Activated B cell treated with CpG ODN at 0.5 μM for 24 hours (primary cell): ENCODE measurements at regions of chr19 and their contacts with region 1.

Region 1: DNA sequence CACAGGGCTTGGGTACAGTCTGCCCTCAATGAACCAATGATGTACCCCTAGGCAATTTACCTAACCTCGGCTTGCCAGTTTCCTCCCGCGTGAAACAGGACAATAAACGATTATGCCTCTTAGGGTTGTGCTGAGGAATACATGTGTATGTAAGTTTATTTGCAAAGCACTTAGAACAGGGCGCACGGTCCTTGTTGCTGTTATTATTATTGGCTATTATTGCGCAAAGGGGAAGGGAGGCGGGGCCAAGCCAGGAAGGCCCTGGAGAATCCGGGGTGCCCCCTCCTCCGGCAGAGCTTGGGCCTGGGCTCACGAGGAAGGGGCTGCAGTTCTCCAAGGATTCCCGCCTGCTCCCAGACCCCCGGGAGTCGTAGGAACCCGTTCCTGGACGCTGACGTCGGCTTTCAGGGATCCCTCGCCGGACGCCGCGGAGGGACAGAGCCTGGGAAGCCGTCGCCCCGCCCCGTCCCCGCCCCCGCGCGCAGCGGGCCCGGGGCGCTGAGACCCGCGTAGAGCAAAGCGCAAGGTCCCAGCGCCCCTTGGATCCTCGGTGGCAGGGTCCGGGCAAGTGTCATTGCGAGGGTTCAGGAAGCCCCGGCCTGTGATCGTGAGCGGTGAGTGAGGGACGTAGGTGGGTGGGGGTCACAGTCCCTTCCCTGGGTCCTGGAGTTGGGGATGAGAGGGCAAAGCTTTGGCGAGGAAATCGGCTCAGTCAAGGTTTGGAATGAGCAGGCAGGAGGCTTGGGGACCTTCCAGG is at the start of gene TMEM91:
- DNase-seq: no peak
- ATAC-seq: no peak
- H3K4me3 Mint-ChIP-seq: peak within 1 kb of the TSS; percentile 52
- H3K27ac Mint-ChIP-seq: no peak within 1 kb of the TSS
- H3K4me1 Mint-ChIP-seq: peaks cover 23% of the 10 kb centered on the region
- H3K27me3 Mint-ChIP-seq: no peaks in the 10 kb centered on the region
- CTCF ChIP-seq: no peak
- total RNA-seq, gene TMEM91: 3.7 and 4.6 TPM in 2 replicates

Region 2: DNA sequence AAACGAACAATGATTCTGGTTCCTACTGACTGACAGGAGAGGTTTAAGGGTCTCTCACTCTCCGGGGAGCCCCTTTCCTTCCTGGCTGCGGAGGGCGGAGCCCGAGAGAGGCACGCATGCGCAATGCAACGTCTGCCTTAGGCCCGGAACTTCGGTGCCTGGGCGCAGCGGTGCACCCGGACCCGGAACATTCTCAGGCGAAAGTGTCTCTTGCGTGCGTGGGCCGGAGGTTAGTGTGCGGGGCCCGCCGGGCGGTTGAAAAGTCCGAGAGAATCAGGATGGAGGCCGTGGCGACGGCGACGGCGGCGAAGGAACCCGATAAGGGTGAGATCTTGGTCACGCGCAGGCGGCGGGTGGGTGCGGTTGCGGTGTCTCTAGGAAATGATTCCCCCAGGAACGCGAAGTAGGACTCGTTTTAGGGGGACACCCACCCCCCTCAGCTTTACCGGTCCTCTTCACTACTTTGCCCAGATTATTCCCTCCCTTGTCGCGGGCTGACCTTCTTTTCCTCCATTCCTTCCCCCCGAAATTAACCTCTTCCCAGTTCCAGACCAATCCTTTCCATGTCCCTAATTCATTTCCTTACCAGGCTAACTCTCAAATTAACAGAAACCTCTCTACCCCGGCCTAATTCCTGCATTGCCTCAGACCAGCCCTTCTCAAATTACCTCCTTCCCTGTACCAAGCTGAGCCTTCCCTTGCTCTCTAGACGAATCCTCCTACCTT is 66.2 kb before region 1 on chr19 and contains the start of gene CCDC97:
- CTCF ChIA-PET with region 1: no interaction called
- POLR2A ChIA-PET with region 1: no interaction called
- intact Hi-C with region 1: no loop called
- DNase-seq: peak; percentile 92
- ATAC-seq: peak; percentile 76
- H3K4me3 Mint-ChIP-seq: peak within 1 kb of the TSS; percentile 99
- H3K27ac Mint-ChIP-seq: peak within 1 kb of the TSS; percentile 100
- H3K4me1 Mint-ChIP-seq: peaks cover 65% of the 10 kb centered on the region
- H3K27me3 Mint-ChIP-seq: no peaks in the 10 kb centered on the region
- CTCF ChIP-seq: no peak
- total RNA-seq, gene CCDC97: 61.7 and 65.3 TPM in 2 replicates

Region 3: DNA sequence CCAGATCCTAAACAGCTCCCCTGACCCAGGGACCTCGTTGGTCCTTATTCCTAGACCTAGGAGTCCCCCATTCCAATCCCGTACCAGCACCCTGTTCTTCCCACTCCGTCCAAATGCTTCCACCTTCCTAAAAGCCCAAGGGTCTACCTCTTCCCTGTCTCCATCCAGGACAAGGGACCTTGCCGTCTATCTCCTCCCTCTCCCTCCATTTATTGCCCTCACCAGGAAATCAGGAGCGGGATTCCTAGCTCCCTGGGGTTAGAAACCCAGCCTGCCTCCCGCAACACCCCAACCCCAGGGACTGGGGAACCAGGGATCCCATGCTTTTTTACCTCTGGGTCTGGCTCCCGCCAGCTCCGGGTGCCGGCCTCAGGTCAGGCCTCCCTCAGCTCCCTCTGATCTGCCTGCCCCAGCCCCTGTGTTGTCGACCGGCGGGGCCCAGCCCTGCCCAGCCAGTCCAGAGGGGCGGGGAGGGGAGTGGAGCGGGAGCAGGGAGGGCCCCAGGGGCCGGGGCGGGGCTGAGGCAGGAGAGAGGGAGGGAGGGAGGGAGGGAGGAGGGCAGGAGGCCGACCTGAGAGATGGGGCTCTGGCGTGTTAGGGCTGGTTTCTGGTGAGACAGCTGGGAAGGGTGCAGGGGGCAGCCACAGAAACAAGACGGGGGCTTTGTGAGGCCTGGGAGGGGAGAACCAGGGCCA is 50.7 kb after region 1 on chr19 and contains the start of gene B3GNT8:
- CTCF ChIA-PET with region 1: no interaction called
- POLR2A ChIA-PET with region 1: no interaction called
- intact Hi-C with region 1: no loop called
- DNase-seq: no peak
- ATAC-seq: peak; percentile 49
- H3K4me3 Mint-ChIP-seq: peak within 1 kb of the TSS; percentile 50
- H3K27ac Mint-ChIP-seq: no peak within 1 kb of the TSS
- H3K4me1 Mint-ChIP-seq: peaks cover 16% of the 10 kb centered on the region
- H3K27me3 Mint-ChIP-seq: no peaks in the 10 kb centered on the region
- CTCF ChIP-seq: no peak
- total RNA-seq, gene B3GNT8: 0.10 and 0.24 TPM in 2 replicates

Region 4: GRCh38 chr19:41554907-41555306 is 178.5 kb after region 1 on chr19:
- CTCF ChIA-PET with region 1: no interaction called
- POLR2A ChIA-PET with region 1: interaction called, 11 read pairs
- intact Hi-C with region 1: no loop called
- DNase-seq: no peak
- ATAC-seq: no peak
- H3K4me3 Mint-ChIP-seq: peak overlapping the region; percentile 76
- H3K27ac Mint-ChIP-seq: peak overlapping the region; percentile 83
- H3K4me1 Mint-ChIP-seq: peaks cover 90% of the 10 kb centered on the region
- H3K27me3 Mint-ChIP-seq: no peaks in the 10 kb centered on the region
- CTCF ChIP-seq: no peak

Region 5: GRCh38 chr19:41775360-41775695 is 398.9 kb after region 1 on chr19:
- CTCF ChIA-PET with region 1: no interaction called
- POLR2A ChIA-PET with region 1: no interaction called
- intact Hi-C with region 1: no loop called
- DNase-seq: no peak
- ATAC-seq: no peak
- H3K4me3 Mint-ChIP-seq: no peak overlapping the region
- H3K27ac Mint-ChIP-seq: no peak overlapping the region
- H3K4me1 Mint-ChIP-seq: no peaks in the 10 kb centered on the region
- H3K27me3 Mint-ChIP-seq: peaks cover 16% of the 10 kb centered on the region
- CTCF ChIP-seq: no peak